Activated CD8-positive, alpha-beta memory T cell treated with anti-CD3 and anti-CD28 coated beads, Interleukin-2, amount 10 ng/mL, durations not matched to agents 7 days and 5 days (primary cell): ENCODE measurements at regions of chr4 and their contacts with region 1.

Region 1: GRCh38 chr4:88284439-88285234 is at the start of gene PPM1K:
- DNase-seq: peak; percentile 100
- ATAC-seq: peak; percentile 91
- H3K4me3 Mint-ChIP-seq: peak within 1 kb of the TSS; percentile 93
- H3K27ac Mint-ChIP-seq: peak within 1 kb of the TSS; percentile 100
- H3K4me1 Mint-ChIP-seq: peaks cover 46% of the 10 kb centered on the region
- H3K27me3 Mint-ChIP-seq: no peaks in the 10 kb centered on the region
- total RNA-seq, gene PPM1K: 76.8 to 125 TPM

Region 2: GRCh38 chr4:88177961-88178625 is 106.5 kb before region 1 on chr4:
- CTCF ChIA-PET with region 1: no interaction called
- DNase-seq: no peak
- ATAC-seq: no peak
- H3K4me3 Mint-ChIP-seq: no peak overlapping the region
- H3K27ac Mint-ChIP-seq: no peak overlapping the region
- H3K4me1 Mint-ChIP-seq: peaks cover 7% of the 10 kb centered on the region
- H3K27me3 Mint-ChIP-seq: no peaks in the 10 kb centered on the region

Region 3: GRCh38 chr4:88320780-88321373 is 36.2 kb after region 1 on chr4:
- CTCF ChIA-PET with region 1: interaction called, 18 read pairs
- DNase-seq: peak; percentile 69
- ATAC-seq: peak; percentile 97
- H3K4me3 Mint-ChIP-seq: peak overlapping the region; percentile 75
- H3K27ac Mint-ChIP-seq: peak overlapping the region; percentile 100
- H3K4me1 Mint-ChIP-seq: peaks cover 33% of the 10 kb centered on the region
- H3K27me3 Mint-ChIP-seq: no peaks in the 10 kb centered on the region

Region 4: GRCh38 chr4:88378691-88379559 is 94.3 kb after region 1 on chr4 and contains the start of gene HERC6:
- CTCF ChIA-PET with region 1: interaction called, 11 read pairs
- DNase-seq: peak; percentile 97
- ATAC-seq: peak; percentile 70
- H3K4me3 Mint-ChIP-seq: peak within 1 kb of the TSS; percentile 90
- H3K27ac Mint-ChIP-seq: peak within 1 kb of the TSS; percentile 97
- H3K4me1 Mint-ChIP-seq: peaks cover 61% of the 10 kb centered on the region
- H3K27me3 Mint-ChIP-seq: no peaks in the 10 kb centered on the region
- total RNA-seq, gene HERC6: 49.9 to 55.8 TPM

Region 5: GRCh38 chr4:88456757-88457306 is 172.2 kb after region 1 on chr4 and contains the start of gene HERC5:
- CTCF ChIA-PET with region 1: interaction called, 14 read pairs
- DNase-seq: peak; percentile 96
- ATAC-seq: peak; percentile 90
- H3K4me3 Mint-ChIP-seq: peak within 1 kb of the TSS; percentile 81
- H3K27ac Mint-ChIP-seq: peak within 1 kb of the TSS; percentile 100
- H3K4me1 Mint-ChIP-seq: peaks cover 54% of the 10 kb centered on the region
- H3K27me3 Mint-ChIP-seq: no peaks in the 10 kb centered on the region
- total RNA-seq, gene HERC5: 69.6 to 118 TPM

Region 6: DNA sequence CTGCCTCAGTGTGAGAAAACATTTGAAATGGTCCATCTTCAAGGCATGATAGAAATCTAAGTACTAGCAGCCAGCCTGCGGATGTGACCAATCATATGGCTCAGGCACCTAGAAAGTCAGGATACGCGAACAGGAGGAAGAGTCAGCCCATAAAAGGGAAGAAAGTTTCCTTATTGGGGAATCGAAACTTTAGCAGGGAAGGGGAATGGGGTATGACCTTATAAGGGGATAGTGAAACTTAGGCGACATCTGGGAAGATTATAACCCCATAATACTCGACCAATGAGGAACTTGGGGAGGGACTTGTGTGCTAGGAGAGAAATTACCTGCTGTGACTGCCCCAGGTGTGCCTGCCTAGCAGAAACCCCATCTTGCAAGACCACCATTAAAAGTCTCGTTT is 265.2 kb after region 1 on chr4:
- CTCF ChIA-PET with region 1: no interaction called
- DNase-seq: no peak
- ATAC-seq: no peak
- H3K4me3 Mint-ChIP-seq: no peak overlapping the region
- H3K27ac Mint-ChIP-seq: no peak overlapping the region
- H3K4me1 Mint-ChIP-seq: no peaks in the 10 kb centered on the region
- H3K27me3 Mint-ChIP-seq: no peaks in the 10 kb centered on the region